GM10248 (cell line): ENCODE measurements at regions of chr11 and their contacts with region 1.

Region 1: GRCh38 chr11:118956094-118956846 is at the start of gene UPK2:
- DNase-seq: peak; percentile 94
- CTCF ChIP-seq: peak; percentile 99

Region 2: DNA sequence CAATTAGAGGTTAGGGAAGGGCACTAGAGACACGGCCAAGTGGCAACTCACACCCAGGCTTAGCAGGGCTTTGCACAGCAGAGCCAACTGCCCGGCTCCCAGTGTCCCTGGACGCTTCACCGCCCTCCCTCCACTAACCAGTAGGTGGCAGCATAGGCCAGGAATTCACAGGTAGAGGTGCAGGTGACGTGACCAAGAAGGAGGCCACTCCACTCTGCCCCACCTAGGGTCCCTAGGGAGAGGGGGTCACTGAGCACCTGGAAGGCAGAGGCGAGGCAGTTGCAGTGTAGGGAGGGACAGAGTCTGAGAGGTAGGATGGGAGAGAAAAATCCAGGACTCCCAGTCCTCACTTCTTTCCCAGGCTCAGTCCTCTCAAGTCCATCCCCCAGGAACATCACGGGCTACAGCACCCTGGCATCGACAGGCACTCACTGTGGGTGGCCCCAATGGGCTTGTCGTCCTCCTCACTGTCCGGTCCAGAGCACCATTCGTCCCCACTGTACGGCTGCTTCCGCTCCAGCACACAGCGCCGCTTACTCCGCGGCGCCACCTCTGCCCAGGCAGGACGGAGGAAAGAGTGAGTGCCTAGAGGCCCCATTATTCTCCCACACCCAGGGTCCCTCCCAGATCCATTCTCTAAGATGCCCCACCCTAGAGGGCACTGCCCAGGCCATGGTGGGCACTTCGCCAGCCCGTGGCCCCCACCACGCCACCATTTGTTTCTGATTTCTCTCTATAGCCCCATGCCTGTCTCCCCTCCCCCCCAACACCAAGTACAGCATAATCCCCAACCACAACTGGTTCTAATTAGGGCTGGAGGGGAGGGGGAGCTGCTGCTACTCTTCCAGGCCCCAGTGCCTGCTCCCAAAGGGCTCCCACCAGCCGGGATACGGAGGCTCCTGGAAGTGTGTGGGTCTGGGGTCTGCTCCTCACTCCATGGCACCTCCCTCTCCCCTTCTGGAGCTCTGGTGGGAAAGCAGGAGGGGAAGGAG is 48.9 kb before region 1 on chr11:
- CTCF ChIA-PET with region 1: interaction called, 37 read pairs
- POLR2A ChIA-PET with region 1: no interaction called
- DNase-seq: peak; percentile 88
- CTCF ChIP-seq: peak; percentile 97

Region 3: GRCh38 chr11:118939953-118940598 is 16.2 kb before region 1 on chr11:
- CTCF ChIA-PET with region 1: interaction called, 15 read pairs
- POLR2A ChIA-PET with region 1: no interaction called
- DNase-seq: peak; percentile 70
- CTCF ChIP-seq: no peak